Naive thymus-derived CD4-positive, alpha-beta T cell (primary cell): ENCODE measurements at regions of chr3 and their contacts with region 1.

Region 1: DNA sequence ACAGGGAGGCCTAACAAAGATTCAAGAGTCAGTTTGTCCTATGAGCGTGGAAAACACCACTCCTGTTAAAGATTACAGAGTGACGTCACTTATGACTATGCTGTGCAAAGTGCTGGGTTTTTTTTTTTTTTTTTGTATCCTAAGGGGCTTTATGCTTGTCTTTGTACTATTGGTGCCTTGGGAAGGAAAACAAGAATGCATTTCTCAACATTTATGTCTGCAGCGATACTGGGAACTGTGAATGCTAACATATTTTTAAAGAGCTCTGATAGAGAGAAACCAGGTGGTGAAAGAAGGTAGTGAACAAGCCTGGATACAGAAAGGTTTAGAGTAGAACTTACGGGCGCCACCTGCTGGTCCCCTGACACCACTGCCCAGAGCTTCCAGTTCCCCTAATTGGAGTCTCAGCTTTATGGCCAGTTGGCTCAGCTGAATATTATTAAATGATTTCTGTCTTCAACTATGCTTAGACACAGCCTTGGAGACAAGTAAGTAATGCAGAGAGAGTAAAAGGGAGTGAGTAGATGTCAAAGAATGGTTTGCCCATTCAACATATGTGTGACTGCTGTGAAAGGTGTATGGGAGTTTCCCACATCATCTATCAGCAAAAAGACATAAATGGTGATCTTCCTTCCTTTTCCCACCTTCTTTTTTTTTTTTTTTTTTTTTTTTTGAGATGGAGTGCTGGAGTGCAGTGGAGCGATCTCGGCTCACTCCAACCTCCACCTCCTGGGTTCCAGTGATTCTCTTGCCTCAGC is 807.9 kb upstream of the CFAP20DC start:
- DNase-seq: peak; percentile 44 to 75 (median 67)
- ATAC-seq: peak; percentile 92
- H3K4me3 ChIP-seq: no peak overlapping the region
- H3K4me3 Mint-ChIP-seq: peak overlapping the region in 5 of 10 donors; percentile 6 to 46 (median 27)
- H3K27ac ChIP-seq: no peak overlapping the region
- H3K27ac Mint-ChIP-seq: peak overlapping the region in 6 of 9 donors; percentile 15 to 84 (median 29)
- H3K4me1 ChIP-seq: peaks cover 0 to 3% of the 10 kb centered on the region in 2 donors
- H3K4me1 Mint-ChIP-seq: peaks cover 7 to 66% (median 58%) of the 10 kb centered on the region in 7 donors
- H3K27me3 ChIP-seq: no peaks in the 10 kb centered on the region
- H3K27me3 Mint-ChIP-seq: no peaks in the 10 kb centered on the region

Region 2: DNA sequence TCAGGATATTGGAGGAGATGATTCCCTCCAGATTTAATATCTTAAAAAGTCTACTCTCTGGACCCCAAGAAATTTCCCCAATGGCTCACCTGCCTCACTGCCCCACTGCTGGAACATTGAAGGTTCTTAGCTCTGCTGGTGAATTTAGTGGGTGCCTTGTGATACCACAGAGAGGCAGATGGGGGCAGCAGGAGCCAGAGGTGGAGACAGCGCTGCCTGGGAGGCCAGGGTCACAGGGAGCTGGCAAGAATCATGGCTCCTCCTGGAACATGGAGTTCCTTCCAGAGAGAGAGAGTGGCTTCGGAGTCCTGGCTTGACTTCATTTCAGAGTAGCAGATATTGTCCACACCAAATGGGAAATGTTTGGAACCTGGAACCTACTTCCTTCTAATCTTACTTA is 544.4 kb before region 1 on chr3:
- CTCF ChIA-PET with region 1: no interaction called
- POLR2A ChIA-PET with region 1: no interaction called
- intact Hi-C with region 1: loop called (anchors 1 kb)
- DNase-seq: peak in 7 of 9 donors; percentile 3 to 47 (median 15)
- ATAC-seq: peak; percentile 59
- H3K4me3 ChIP-seq: no peak overlapping the region
- H3K4me3 Mint-ChIP-seq: no peak overlapping the region
- H3K27ac ChIP-seq: no peak overlapping the region
- H3K27ac Mint-ChIP-seq: peak overlapping the region in 1 of 9 donors; percentile 80
- H3K4me1 ChIP-seq: no peaks in the 10 kb centered on the region
- H3K4me1 Mint-ChIP-seq: peaks cover 0 to 9% (median 3%) of the 10 kb centered on the region in 7 donors
- H3K27me3 ChIP-seq: no peaks in the 10 kb centered on the region
- H3K27me3 Mint-ChIP-seq: peaks cover 0 to 7% (median 0%) of the 10 kb centered on the region in 5 donors

Region 3: DNA sequence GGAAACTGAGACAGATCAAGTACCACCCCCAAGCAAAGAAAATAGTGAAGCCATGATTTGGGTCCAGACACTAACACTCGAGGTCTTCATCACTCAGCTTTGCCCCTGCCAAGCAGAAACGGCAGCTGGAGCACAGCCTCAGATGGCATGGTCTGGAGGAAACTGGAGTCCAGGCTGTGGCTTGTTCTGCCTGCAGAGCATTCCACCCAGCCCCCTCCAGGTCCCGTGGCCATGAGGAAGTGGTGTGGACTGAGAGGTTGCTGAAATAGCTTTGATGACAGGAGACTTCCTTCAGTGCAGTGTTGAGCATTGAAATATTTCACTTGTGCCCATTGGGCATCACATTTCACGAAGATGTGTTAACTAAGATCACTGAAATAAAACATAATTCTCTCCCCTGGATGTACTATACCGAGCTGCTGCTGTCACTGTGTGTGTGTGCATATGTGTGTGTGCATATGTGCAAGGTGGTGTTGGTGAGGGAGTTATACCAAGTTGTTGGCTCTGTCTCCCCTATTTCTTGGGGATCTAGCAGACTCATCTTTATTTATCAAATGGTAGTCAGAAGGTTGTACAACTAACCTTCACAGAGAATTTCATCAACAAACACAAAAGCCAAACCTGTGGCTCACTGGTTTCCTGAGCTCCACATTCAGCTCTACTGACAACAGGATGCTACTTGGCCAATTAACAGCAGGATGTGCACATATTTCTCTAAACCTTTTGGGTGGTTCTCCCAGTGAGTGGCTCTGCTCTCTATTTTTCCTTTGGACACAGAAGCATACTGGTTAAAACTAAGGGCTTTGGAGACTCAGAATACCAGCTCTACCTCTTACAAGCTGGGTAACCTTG is 147.8 kb before region 1 on chr3:
- CTCF ChIA-PET with region 1: interaction called, 3 read pairs
- POLR2A ChIA-PET with region 1: no interaction called
- intact Hi-C with region 1: loop called in 1 of 2 experiments (anchors 2 kb)
- DNase-seq: peak in 6 of 9 donors; percentile 7 to 47 (median 36)
- ATAC-seq: peak; percentile 88
- H3K4me3 ChIP-seq: no peak overlapping the region
- H3K4me3 Mint-ChIP-seq: no peak overlapping the region
- H3K27ac ChIP-seq: no peak overlapping the region
- H3K27ac Mint-ChIP-seq: no peak overlapping the region
- H3K4me1 ChIP-seq: peaks cover 0 to 17% of the 10 kb centered on the region in 2 donors
- H3K4me1 Mint-ChIP-seq: peaks cover 0 to 4% (median 3%) of the 10 kb centered on the region in 7 donors
- H3K27me3 ChIP-seq: no peaks in the 10 kb centered on the region
- H3K27me3 Mint-ChIP-seq: peaks cover 0 to 2% (median 0%) of the 10 kb centered on the region in 5 donors

Region 4: DNA sequence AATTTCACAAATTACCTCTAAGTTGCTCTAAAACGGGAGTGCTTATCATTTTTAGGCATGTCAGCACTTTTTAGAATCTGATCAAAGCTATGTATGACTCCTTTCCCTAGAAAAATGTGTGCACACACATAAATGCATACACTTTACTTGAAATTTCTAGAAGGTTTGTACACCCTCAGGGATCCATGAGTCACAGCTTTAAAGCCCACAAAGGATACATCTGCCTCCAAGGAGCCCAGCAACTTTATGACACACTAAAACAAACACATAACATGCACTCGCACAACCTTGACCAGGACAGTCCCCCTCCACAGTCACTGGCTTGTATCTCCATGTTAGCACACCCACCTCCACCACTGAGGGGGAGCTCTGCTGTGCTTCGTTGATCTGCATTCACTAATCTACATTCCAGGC is 86.0 kb before region 1 on chr3:
- CTCF ChIA-PET with region 1: interaction called, 5 read pairs
- POLR2A ChIA-PET with region 1: no interaction called
- intact Hi-C with region 1: loop called (anchors 5 to 10 kb)
- DNase-seq: no peak
- ATAC-seq: no peak
- H3K4me3 ChIP-seq: no peak overlapping the region
- H3K4me3 Mint-ChIP-seq: peak overlapping the region in 5 of 10 donors; percentile 67 to 79 (median 73)
- H3K27ac ChIP-seq: no peak overlapping the region
- H3K27ac Mint-ChIP-seq: peak overlapping the region in 4 of 9 donors; percentile 28 to 65 (median 53)
- H3K4me1 ChIP-seq: peaks cover 19 to 42% of the 10 kb centered on the region in 2 donors
- H3K4me1 Mint-ChIP-seq: peaks cover 37 to 86% (median 74%) of the 10 kb centered on the region in 7 donors
- H3K27me3 ChIP-seq: no peaks in the 10 kb centered on the region
- H3K27me3 Mint-ChIP-seq: no peaks in the 10 kb centered on the region

Region 5: DNA sequence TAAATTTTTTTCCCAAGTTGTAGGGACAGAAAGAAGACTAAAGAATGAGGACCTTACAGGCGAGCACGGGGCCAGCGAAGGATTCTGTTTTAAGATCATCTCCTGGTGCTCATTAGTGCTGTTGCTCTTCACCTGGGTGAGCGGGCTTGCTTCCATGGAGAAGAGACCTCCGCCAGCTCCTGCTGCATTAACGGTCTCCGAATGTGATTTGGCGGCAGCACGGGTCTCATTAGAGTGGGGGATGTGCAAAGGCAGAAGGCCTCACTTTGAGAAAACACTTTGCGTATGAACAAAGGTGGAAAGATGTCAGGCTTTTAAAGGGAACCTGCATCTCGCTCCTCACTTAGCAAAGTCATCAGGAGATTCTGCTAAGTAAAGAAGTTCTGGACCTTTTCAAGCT is 54.5 kb before region 1 on chr3:
- CTCF ChIA-PET with region 1: no interaction called
- POLR2A ChIA-PET with region 1: no interaction called
- intact Hi-C with region 1: no loop called
- DNase-seq: no peak
- ATAC-seq: no peak
- H3K4me3 ChIP-seq: no peak overlapping the region
- H3K4me3 Mint-ChIP-seq: no peak overlapping the region
- H3K27ac ChIP-seq: no peak overlapping the region
- H3K27ac Mint-ChIP-seq: peak overlapping the region in 2 of 9 donors; percentile 11 to 67
- H3K4me1 ChIP-seq: no peaks in the 10 kb centered on the region
- H3K4me1 Mint-ChIP-seq: peaks cover 5 to 82% (median 56%) of the 10 kb centered on the region in 7 donors
- H3K27me3 ChIP-seq: no peaks in the 10 kb centered on the region
- H3K27me3 Mint-ChIP-seq: no peaks in the 10 kb centered on the region

Region 6: DNA sequence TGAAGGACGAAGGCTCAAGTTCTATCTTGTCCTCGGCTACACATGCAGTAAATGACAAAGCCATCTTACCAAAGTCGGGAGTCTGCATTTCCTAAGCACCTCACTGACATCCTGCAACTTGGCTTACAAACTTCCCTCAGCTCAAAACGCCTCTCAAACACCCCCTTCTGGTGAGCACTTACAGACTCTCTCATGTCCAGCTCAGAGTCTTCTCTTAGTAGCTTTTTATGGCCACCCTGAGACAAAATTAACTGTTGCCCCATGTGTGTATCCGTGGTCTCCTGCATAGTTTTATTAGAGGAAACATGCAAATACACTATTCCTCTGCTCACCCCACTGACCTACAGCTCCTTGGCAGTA is 573.8 kb after region 1 on chr3:
- CTCF ChIA-PET with region 1: no interaction called
- POLR2A ChIA-PET with region 1: no interaction called
- intact Hi-C with region 1: loop called in 1 of 2 experiments (anchors 5 kb)
- DNase-seq: peak in 4 of 9 donors; percentile 13 to 23 (median 19)
- ATAC-seq: peak; percentile 38
- H3K4me3 ChIP-seq: no peak overlapping the region
- H3K4me3 Mint-ChIP-seq: peak overlapping the region in 4 of 10 donors; percentile 22 to 59 (median 46)
- H3K27ac ChIP-seq: no peak overlapping the region
- H3K27ac Mint-ChIP-seq: peak overlapping the region in 2 of 9 donors; percentile 21 to 60
- H3K4me1 ChIP-seq: no peaks in the 10 kb centered on the region
- H3K4me1 Mint-ChIP-seq: peaks cover 0 to 34% (median 27%) of the 10 kb centered on the region in 7 donors
- H3K27me3 ChIP-seq: peaks cover 0 to 5% of the 10 kb centered on the region in 2 donors
- H3K27me3 Mint-ChIP-seq: no peaks in the 10 kb centered on the region

Region 7: GRCh38 chr3:61381745-61382392 is 1524.1 kb after region 1 on chr3:
- CTCF ChIA-PET with region 1: interaction called, 4 read pairs
- POLR2A ChIA-PET with region 1: no interaction called
- intact Hi-C with region 1: loop called in 1 of 2 experiments (anchors 2 kb)
- DNase-seq: peak in 6 of 9 donors; percentile 32 to 60 (median 44)
- ATAC-seq: peak; percentile 63
- H3K4me3 ChIP-seq: no peak overlapping the region
- H3K4me3 Mint-ChIP-seq: no peak overlapping the region
- H3K27ac ChIP-seq: no peak overlapping the region
- H3K27ac Mint-ChIP-seq: no peak overlapping the region
- H3K4me1 ChIP-seq: no peaks in the 10 kb centered on the region
- H3K4me1 Mint-ChIP-seq: peaks cover 3 to 6% (median 5%) of the 10 kb centered on the region in 7 donors
- H3K27me3 ChIP-seq: no peaks in the 10 kb centered on the region
- H3K27me3 Mint-ChIP-seq: peaks cover 14 to 47% (median 27%) of the 10 kb centered on the region in 5 donors